ENCODE measurements at regions of chr20 and their contacts with region 1.

Region 1: DNA sequence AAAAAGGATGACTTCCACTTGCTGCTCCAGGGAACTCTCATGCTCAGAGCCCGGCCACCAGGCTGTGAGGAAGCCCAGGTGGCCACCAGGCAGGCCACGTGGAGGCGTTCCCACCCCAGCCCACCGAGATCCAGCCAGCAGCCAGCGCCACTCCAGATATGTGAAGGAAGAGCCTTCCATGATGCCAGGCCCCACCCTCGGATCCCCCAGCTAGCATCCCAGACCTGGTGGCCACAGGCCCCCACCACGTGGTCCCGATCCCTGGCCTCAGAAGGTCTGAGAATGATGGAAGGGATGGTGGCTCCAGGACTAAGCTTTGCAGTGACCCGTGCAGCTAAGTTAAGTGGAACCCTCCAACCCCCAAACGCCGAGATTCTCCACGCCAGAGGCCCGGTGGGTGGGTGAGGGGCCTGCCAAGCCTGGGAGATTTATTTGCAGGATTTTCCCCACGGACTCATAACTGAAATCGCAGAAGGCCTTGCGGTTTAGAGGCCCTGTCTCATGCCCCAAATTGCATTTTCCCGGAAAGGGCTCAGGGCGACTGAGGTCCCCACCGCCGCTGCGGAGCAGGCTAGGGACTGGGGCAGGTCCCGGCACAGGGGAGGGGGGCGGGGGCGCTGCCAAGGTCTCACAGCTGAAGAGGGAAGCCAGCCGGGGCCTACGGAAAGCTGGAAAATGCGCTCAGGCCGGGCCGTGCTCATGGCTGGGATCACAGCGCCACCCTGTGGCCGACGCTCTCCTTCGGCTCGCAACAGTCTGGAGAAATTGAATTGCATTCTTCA is 31.1 kb upstream of the CST7 start:
- DNase-seq: peak; percentile 9
- H3K4me3 ChIP-seq: no peak overlapping the region
- CTCF ChIP-seq: peak; percentile 90

Region 2: DNA sequence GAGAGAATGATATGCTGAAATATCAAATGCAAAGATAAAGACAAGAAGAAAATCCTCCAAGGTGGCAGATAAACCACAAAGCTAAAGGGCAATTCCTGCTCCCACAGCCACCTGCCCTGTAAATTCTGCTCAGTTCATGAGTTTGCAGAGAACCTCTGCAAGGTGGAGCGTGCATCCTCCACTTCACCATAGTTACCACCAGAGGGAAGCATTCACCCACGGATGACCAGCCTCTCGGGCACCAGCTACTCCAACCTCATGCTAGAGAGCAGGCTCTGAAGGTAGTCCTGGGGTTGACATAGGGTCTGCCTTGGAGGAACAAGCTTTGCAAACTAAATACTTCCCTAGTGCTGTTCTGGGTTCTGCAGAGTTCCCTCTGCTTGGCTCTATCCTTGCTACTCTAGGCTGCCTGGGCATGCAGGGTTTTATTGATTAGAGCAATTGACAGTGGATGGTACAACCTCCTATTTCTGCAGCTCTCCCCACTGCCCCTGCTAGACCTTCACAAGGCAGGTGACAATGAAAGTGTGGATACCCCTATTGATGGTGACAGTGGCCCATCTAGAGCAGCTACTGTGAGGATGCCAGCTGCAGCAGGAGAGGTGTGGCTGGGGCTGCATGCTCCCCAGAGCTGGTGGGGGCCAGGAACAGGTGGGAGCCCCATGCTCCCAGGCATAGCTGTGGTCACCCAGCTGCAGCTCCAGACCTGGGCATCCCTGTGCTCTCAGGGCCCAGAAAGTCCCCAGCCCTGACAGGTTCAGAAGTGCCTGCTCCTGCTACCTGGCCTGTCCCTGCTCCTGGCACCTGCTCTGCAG is 980.5 kb before region 1 on chr20:
- CTCF ChIA-PET with region 1: interaction called, 10 read pairs
- POLR2A ChIA-PET with region 1: no interaction called
- DNase-seq: peak; percentile 9
- H3K4me3 ChIP-seq: no peak overlapping the region
- CTCF ChIP-seq: peak; percentile 75